ENCODE measurements at regions of chr10 and their contacts with region 1.

Region 1: GRCh38 chr10:46314071-46314470 is 27.3 kb downstream of the ANTXRL start:
- DNase-seq: no peak
- H3K4me3 ChIP-seq: no peak overlapping the region
- H3K4me3 Mint-ChIP-seq: no peak overlapping the region
- H3K27ac Mint-ChIP-seq: no peak overlapping the region
- H3K4me1 ChIP-seq: peaks cover 18% of the 10 kb centered on the region
- H3K4me1 Mint-ChIP-seq: peaks cover 16% of the 10 kb centered on the region
- H3K27me3 ChIP-seq: no peaks in the 10 kb centered on the region
- H3K27me3 Mint-ChIP-seq: no peaks in the 10 kb centered on the region
- CTCF ChIP-seq: no peak

Region 2: DNA sequence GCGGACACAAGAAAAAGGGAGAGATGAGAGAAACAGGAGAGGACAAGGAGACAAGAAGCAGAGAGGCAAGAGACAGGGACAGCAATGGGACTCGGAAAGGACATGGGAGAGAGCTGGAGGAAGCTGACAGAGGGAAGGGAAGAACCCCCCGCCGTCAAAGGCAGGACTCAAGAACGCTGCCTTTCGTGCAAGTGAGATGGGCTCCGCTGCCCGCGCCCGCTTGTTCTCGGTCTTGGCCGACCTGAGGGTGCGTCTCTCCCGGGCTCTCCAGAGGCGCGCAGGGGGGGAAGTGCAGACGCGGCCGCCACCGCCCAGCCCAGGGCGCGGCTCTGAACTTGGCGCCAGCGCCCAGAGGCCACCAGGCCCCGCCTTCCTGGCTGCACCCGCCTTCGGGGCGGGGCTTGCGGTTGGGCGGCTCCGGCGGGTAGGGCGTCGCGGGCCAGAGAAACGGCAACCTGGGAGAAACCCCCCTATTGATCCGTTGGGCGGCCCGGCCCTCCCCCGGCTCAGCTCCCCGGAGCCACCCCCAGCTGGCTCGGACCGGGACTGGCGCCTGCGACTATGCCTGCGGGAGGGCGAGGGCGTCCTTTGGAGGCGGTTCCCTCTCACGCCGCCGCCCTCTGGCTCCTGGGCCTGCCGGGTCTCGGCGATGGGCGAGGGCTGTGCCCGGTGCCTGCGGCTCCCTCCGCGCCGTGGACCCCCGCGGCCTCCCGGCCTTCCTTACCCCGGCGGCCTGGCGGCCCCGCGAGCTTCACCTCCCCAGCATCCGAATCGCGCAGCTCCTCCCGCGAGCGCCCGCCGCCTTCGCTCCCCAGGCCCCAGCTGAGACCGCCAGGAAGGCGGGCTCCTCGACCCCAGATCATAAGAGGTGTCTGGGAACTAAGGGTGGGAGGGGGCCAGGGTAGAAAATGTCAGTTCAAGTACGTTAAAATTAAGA is 29.5 kb before region 1 on chr10:
- CTCF ChIA-PET with region 1: no interaction called
- POLR2A ChIA-PET with region 1: no interaction called
- intact Hi-C with region 1: loop called (anchors 2 kb)
- DNase-seq: peak; percentile 72 to 88
- H3K4me3 ChIP-seq: peak overlapping the region; percentile 63
- H3K4me3 Mint-ChIP-seq: peak overlapping the region; percentile 81
- H3K27ac Mint-ChIP-seq: peak overlapping the region; percentile 16
- H3K4me1 ChIP-seq: 0 out of 2 replicates have a peak, but pooled peaks cover 3% of the 10 kb centered on the region
- H3K4me1 Mint-ChIP-seq: peaks cover 7% of the 10 kb centered on the region
- H3K27me3 ChIP-seq: peaks cover 2% of the 10 kb centered on the region
- H3K27me3 Mint-ChIP-seq: peaks cover 13% of the 10 kb centered on the region
- CTCF ChIP-seq: no peak

Measured in Caco-2 (cell line).